ENCODE measurements at regions of chr6 and their contacts with region 1.

Region 1: DNA sequence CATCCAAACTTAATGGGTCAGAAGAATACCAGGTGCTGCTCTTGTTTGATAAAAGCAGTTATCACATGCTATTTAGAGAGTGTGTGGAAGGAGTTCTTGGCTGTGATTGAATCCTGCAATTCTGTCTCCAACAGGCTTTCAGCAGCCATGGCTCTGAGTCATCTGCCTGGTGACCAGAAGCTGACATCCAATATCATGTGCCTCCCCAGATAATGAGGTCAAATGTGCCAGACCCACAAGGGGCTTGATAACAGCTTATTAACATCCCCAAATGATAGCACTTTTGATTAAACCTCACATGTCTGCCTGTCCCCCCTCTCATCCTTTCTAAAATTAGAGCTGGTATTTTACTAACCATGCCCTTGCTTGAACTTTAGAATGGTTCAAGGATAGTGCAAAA is 175.7 kb upstream of the PLN start:
- DNase-seq: peak; percentile 33 to 67 (median 60)
- ATAC-seq: peak; percentile 93
- H3K4me3 ChIP-seq: no peak overlapping the region
- H3K27ac ChIP-seq: no peak overlapping the region
- H3K4me1 ChIP-seq: no peaks in the 10 kb centered on the region
- H3K27me3 ChIP-seq: no peaks in the 10 kb centered on the region

Region 2: DNA sequence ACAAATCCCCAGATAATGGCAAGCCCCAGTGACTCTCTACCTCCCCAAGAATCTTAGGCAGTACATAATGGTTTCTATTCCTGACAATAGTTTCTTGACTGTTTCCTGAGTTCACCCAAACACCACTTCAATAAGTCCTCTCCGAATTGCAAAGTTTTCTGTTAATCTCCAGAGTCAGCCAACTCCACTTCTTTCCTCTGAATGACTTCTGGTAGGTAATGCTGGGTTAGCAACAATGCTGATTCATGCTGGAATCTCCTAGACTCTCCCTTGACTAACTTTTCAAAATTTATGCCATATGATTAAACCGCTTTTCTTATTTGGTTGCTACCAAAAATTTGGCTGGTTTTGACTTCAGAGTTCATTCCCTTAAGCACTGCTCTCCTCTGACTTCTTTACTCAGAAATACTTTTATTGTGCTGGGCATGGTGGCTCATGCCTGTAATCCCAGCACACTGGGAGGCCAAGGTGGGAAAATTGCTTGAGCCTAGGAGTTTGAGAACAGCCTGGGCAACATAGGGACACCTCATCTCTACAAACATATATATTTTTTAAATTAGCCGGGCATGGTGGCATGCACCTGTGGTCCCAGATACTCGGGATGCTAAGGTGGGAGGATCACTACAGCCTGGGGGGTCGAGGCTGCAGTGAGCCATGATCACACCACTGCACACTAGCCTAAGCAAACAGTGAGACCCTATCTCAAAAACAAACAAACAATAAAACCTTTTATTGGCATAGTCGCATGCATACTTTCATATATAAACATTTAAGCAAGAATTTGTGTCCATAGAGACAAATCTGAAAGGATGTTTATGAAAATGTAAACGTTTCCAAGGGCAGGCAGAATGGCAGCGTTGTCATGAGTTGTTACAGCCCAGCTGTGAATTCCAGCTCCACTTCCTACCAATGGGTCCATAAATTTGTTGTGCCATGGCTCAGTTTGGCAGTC is 73.7 kb before region 1 on chr6:
- intact Hi-C with region 1: loop called in 1 of 4 experiments (anchors 5 kb)
- DNase-seq: no peak
- ATAC-seq: no peak
- H3K4me3 ChIP-seq: no peak overlapping the region
- H3K27ac ChIP-seq: no peak overlapping the region
- H3K4me1 ChIP-seq: peaks cover 9% of the 10 kb centered on the region
- H3K27me3 ChIP-seq: no peaks in the 10 kb centered on the region

Region 3: GRCh38 chr6:118464620-118465019 is 92.2 kb after region 1 on chr6:
- intact Hi-C with region 1: loop called in 1 of 4 experiments (anchors 5 kb)
- DNase-seq: no peak
- ATAC-seq: peak; percentile 47 to 65
- H3K4me3 ChIP-seq: no peak overlapping the region
- H3K27ac ChIP-seq: peak overlapping the region; percentile 23
- H3K4me1 ChIP-seq: no peaks in the 10 kb centered on the region
- H3K27me3 ChIP-seq: no peaks in the 10 kb centered on the region

Region 4: GRCh38 chr6:118485601-118486550 is 113.5 kb after region 1 on chr6:
- intact Hi-C with region 1: no loop called
- DNase-seq: no peak
- ATAC-seq: no peak
- H3K4me3 ChIP-seq: no peak overlapping the region
- H3K27ac ChIP-seq: no peak overlapping the region
- H3K4me1 ChIP-seq: no peaks in the 10 kb centered on the region
- H3K27me3 ChIP-seq: no peaks in the 10 kb centered on the region

Region 5: DNA sequence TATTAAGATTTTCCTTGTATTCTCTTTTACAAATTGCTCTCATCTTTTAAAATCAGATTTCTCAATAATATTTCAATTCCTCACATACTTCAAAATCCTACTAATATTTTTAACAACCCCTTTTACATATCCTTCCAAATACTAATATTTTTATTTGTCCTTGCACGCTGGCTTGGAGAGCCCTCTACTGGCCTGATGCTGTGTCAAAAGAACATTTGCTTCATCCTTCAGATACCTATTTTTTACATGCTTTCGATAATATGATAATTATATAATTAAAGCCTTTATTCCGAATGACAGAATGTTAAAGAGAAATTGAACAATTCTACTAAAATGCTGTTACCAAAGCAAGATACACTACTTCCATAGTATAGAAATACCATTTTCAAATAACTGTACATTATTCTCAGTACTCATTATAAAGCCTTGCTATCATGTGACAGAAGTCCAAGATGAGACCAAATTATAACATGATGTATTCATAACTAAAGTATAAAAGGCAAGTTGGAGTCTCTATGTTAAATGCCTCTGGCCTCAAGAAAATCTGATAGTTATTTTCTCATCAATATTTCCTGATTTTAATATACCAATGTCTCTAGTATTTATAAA is 136.7 kb after region 1 on chr6:
- intact Hi-C with region 1: loop called in 1 of 4 experiments (anchors 5 kb)
- DNase-seq: peak in 2 of 3 donors; percentile 54 to 58
- ATAC-seq: no peak
- H3K4me3 ChIP-seq: no peak overlapping the region
- H3K27ac ChIP-seq: no peak overlapping the region
- H3K4me1 ChIP-seq: no peaks in the 10 kb centered on the region
- H3K27me3 ChIP-seq: no peaks in the 10 kb centered on the region

Measured in right cardiac atrium (tissue), 5 donors.